ENCODE measurements at regions of chr1 and their contacts with region 1.

Region 1: DNA sequence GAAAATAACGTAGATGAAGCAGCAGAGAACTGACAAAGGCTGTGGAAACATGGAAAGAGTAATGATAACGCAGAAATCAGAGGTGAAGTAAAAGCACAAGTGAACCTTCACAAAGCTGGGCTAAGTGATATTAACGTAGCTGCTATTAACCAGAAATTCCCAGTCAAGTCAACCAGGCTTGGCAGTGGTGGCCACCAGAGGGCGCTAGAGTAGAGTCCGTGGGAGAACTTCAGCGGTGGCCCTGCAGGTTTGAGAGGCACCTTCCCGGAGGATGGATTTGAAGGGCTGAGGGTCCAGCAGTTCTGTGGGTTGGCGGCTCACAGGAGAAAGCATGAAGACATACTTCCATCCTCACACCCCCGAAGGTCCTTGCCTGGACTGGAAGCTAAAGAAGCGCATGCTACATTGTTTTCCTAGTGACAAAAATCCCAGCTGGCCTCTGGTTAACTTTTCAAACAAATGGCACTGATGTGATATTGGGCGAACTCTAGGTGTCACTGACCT is 81.7 kb upstream of the ZNF648 start:
- DNase-seq: peak; percentile 77 to 83 (median 83)
- H3K4me3 ChIP-seq: peak overlapping the region in 1 of 3 experiments; percentile 27
- H3K4me3 Mint-ChIP-seq: peak overlapping the region; percentile 48 to 51
- H3K27ac ChIP-seq: peak overlapping the region; percentile 95 to 99
- H3K27ac Mint-ChIP-seq: peak overlapping the region; percentile 98 to 100 (median 99)
- H3K4me1 ChIP-seq: peaks cover 48 to 56% of the 10 kb centered on the region in 2 donors
- H3K4me1 Mint-ChIP-seq: peaks cover 50% of the 10 kb centered on the region
- H3K27me3 ChIP-seq: no peaks in the 10 kb centered on the region
- H3K27me3 Mint-ChIP-seq: peaks cover 0 to 8% (median 5%) of the 10 kb centered on the region in 3 donors
- CTCF ChIP-seq: peak; percentile 94

Region 2: DNA sequence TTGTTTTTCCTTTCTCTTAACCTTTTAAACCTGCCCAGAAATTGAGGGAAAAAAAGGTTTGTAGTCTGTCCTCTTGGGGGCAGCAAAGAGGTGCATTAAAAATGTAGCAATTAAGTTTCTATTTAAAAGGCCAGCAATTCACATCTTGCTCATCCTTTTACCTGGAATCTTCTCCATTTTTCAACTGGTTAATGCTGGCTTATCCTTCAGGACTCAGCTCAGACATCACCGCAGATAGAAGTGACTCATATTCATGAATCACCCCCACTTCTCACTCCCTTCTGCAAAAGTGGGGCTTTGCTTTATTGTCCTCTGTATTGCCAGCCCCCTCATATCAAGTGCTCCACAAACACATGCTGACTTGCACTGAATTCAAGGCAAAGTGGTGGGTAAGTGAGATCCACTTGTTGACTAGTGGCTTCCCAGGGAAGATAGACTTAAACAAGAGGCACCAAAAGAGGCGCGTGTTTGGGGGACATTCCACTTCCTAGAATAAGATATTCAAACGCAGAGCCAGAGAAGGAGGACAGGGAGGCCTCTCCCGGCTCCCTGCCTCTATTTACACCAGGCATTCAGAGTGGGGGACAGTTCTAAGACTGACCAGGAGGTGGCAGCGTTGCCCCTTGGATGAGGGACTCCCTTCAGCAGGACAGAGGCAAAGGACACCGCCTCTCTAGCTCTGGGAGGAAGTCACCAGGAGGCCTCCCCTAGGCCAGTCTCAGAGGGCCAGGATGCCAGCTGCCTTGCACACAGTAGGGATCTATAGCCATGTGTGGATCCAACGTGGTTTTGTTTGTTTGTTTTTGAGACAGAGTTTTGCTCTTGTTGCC is 58.5 kb before region 1 on chr1:
- intact Hi-C with region 1: no loop called
- DNase-seq: peak; percentile 82 to 86 (median 85)
- H3K4me3 ChIP-seq: no peak overlapping the region
- H3K4me3 Mint-ChIP-seq: no peak overlapping the region
- H3K27ac ChIP-seq: no peak overlapping the region
- H3K27ac Mint-ChIP-seq: peak overlapping the region in 3 of 7 donors; percentile 4 to 76 (median 50)
- H3K4me1 ChIP-seq: peaks cover 6 to 7% of the 10 kb centered on the region in 2 donors
- H3K4me1 Mint-ChIP-seq: peaks cover 13% of the 10 kb centered on the region
- H3K27me3 ChIP-seq: no peaks in the 10 kb centered on the region
- H3K27me3 Mint-ChIP-seq: peaks cover 0 to 2% (median 0%) of the 10 kb centered on the region in 3 donors
- CTCF ChIP-seq: peak; percentile 87

Region 3: DNA sequence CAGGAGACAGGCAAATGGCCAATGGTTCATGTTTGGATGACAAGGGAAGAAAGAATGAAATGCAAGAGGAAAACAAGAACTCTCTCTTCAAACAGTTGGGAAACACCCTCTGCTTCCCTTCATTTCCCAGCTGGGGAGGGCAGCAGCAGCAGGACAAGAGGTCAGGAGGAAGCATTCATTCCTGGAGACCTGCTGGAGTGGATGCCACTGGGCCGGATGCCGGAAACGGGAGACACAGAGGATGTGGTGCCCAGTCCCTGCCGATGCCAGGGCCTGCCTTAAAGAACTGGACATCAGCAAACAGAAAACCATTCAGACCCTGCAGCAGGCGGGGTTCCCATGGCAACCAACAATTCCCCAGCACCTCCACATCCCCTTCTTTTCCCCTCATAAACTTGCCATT is 20.6 kb after region 1 on chr1:
- intact Hi-C with region 1: no loop called
- DNase-seq: no peak
- H3K4me3 ChIP-seq: no peak overlapping the region
- H3K4me3 Mint-ChIP-seq: no peak overlapping the region
- H3K27ac ChIP-seq: no peak overlapping the region
- H3K27ac Mint-ChIP-seq: peak overlapping the region in 2 of 7 donors; percentile 9 to 26
- H3K4me1 ChIP-seq: peaks cover 1 to 4% of the 10 kb centered on the region in 2 donors
- H3K4me1 Mint-ChIP-seq: peaks cover 6% of the 10 kb centered on the region
- H3K27me3 ChIP-seq: no peaks in the 10 kb centered on the region
- H3K27me3 Mint-ChIP-seq: peaks cover 0 to 3% (median 0%) of the 10 kb centered on the region in 3 donors
- CTCF ChIP-seq: no peak

Region 4: GRCh38 chr1:182175361-182175931 is 32.2 kb after region 1 on chr1:
- intact Hi-C with region 1: loop called in 1 of 2 experiments (anchors 5 kb)
- DNase-seq: peak; percentile 80 to 90 (median 80)
- H3K4me3 ChIP-seq: no peak overlapping the region
- H3K4me3 Mint-ChIP-seq: no peak overlapping the region
- H3K27ac ChIP-seq: peak overlapping the region; percentile 6 to 63
- H3K27ac Mint-ChIP-seq: peak overlapping the region; percentile 67 to 92 (median 84)
- H3K4me1 ChIP-seq: peaks cover 36 to 56% of the 10 kb centered on the region in 2 donors
- H3K4me1 Mint-ChIP-seq: peaks cover 34% of the 10 kb centered on the region
- H3K27me3 ChIP-seq: no peaks in the 10 kb centered on the region
- H3K27me3 Mint-ChIP-seq: peaks cover 0 to 3% (median 0%) of the 10 kb centered on the region in 3 donors
- CTCF ChIP-seq: no peak

Region 5: GRCh38 chr1:182198049-182198501 is 54.9 kb after region 1 on chr1:
- intact Hi-C with region 1: loop called (anchors 2 to 5 kb)
- DNase-seq: peak in 2 of 3 donors; percentile 31 to 43
- H3K4me3 ChIP-seq: no peak overlapping the region
- H3K4me3 Mint-ChIP-seq: no peak overlapping the region
- H3K27ac ChIP-seq: no peak overlapping the region
- H3K27ac Mint-ChIP-seq: peak overlapping the region in 1 of 7 donors; percentile 20
- H3K4me1 ChIP-seq: peaks cover 17 to 30% of the 10 kb centered on the region in 2 donors
- H3K4me1 Mint-ChIP-seq: peaks cover 30% of the 10 kb centered on the region
- H3K27me3 ChIP-seq: no peaks in the 10 kb centered on the region
- H3K27me3 Mint-ChIP-seq: no peaks in the 10 kb centered on the region
- CTCF ChIP-seq: peak; percentile 67

Region 6: GRCh38 chr1:182337736-182338571 is 194.7 kb after region 1 on chr1:
- intact Hi-C with region 1: no loop called
- DNase-seq: no peak
- H3K4me3 ChIP-seq: no peak overlapping the region
- H3K4me3 Mint-ChIP-seq: no peak overlapping the region
- H3K27ac ChIP-seq: no peak overlapping the region
- H3K27ac Mint-ChIP-seq: peak overlapping the region in 2 of 7 donors; percentile 9 to 28
- H3K4me1 ChIP-seq: peaks cover 0 to 3% of the 10 kb centered on the region in 2 donors
- H3K4me1 Mint-ChIP-seq: peaks cover 16% of the 10 kb centered on the region
- H3K27me3 ChIP-seq: no peaks in the 10 kb centered on the region
- H3K27me3 Mint-ChIP-seq: peaks cover 0 to 4% (median 2%) of the 10 kb centered on the region in 3 donors
- CTCF ChIP-seq: no peak

Region 7: DNA sequence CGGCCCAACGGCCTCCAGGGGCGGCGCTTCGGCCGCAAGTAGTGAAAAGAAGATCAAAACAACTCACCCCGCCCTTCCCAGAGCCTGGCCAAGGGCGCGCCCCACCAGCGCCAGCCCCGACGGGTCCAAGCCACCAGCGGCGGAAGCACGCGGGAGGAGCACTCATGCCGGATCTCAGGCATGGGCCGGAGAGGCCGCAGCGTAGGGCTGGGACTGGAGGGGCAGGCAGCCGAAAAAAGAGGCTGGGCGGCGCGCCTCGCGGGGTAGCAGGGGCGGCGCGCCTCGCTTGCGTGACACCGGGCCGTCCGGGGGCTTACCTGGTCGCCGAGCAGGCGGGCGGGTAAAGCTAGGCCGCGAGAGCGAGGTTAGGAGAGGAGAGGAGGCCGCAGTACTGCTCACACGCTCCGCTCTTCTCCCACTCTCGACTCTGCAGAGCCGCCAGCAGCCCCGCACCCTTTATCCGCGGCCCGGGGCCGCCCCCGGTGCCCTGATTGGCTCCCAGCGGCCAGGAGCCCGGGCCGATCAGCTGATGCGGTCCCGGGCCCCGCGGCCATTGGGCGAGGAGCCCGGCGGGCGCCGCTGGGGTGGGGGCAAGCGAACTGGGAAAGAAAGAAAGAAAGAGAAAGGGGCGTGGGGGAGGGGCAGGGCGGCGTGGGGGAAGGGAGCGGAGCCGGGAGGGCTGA is 248.3 kb after region 1 on chr1 and contains the start of gene GLUL:
- intact Hi-C with region 1: loop called (anchors 2 kb)
- DNase-seq: peak; percentile 82 to 85 (median 83)
- H3K4me3 ChIP-seq: peak within 1 kb of the TSS; percentile 75 to 97 (median 96)
- H3K4me3 Mint-ChIP-seq: peak within 1 kb of the TSS; percentile 100
- H3K27ac ChIP-seq: peak within 1 kb of the TSS; percentile 77 to 79
- H3K27ac Mint-ChIP-seq: peak within 1 kb of the TSS; percentile 91 to 98 (median 95)
- H3K4me1 ChIP-seq: peaks cover 48 to 57% of the 10 kb centered on the region in 2 donors
- H3K4me1 Mint-ChIP-seq: peaks cover 70% of the 10 kb centered on the region
- H3K27me3 ChIP-seq: no peaks in the 10 kb centered on the region
- H3K27me3 Mint-ChIP-seq: peaks cover 0 to 3% (median 0%) of the 10 kb centered on the region in 3 donors
- CTCF ChIP-seq: no peak
- polyA plus RNA-seq, gene GLUL: 506 to 1,423 (median 523) TPM

Region 8: GRCh38 chr1:182397771-182398393 is 254.7 kb after region 1 on chr1:
- intact Hi-C with region 1: loop called in 1 of 2 experiments (anchors 2 kb)
- DNase-seq: peak in 1 of 3 donors; percentile 55
- H3K4me3 ChIP-seq: no peak overlapping the region
- H3K4me3 Mint-ChIP-seq: no peak overlapping the region
- H3K27ac ChIP-seq: no peak overlapping the region
- H3K27ac Mint-ChIP-seq: peak overlapping the region in 4 of 7 donors; percentile 20 to 77 (median 50)
- H3K4me1 ChIP-seq: peaks cover 31 to 40% of the 10 kb centered on the region in 2 donors
- H3K4me1 Mint-ChIP-seq: peaks cover 44% of the 10 kb centered on the region
- H3K27me3 ChIP-seq: no peaks in the 10 kb centered on the region
- H3K27me3 Mint-ChIP-seq: peaks cover 0 to 3% (median 2%) of the 10 kb centered on the region in 3 donors
- CTCF ChIP-seq: no peak

Measured in CD14-positive monocyte (primary cell).